ENCODE measurements at regions of chr19 and their contacts with region 1.

Region 1: DNA sequence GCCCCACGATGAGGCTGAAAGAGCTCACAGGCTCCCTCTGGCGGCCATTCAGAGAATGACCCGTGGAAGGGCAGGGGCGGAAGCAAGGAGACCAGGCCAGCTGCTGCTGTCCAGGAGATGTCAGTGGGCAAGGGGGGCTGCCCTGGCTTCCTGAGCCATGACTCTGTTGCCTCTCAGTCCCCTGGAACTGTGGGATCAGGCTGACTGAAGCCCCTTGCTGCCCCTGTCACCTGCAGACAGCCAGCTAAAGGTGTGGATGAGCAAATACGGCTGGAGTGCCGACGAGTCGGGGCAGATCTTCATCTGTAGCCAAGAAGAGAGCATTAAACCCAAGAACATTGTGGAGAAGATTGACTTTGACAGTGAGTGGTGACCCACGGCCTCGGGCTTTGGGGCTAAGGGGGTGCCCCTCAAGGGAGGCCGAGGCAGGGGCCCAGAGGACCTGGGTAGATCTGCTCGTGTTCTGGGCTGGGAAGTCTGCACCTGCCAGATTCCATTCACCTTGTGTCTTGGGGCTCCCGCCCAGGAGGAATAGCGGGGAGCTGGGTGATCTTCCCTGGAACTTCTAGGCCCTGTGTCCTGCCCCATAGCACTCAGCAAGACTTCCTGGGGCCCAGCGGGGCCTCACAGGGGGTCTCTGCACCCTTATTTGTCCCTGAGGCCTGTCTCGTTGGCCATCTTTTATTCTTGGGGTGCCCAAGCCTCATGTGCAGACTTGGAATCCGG is 12.5 kb upstream of the ACTN4 start:
- DNase-seq: peak; percentile 87
- H3K4me3 ChIP-seq: no peak overlapping the region; a peak in 1 of 4 replicates
- H3K27ac ChIP-seq: no peak overlapping the region
- H3K4me1 ChIP-seq: no peaks in the 10 kb centered on the region
- H3K27me3 ChIP-seq: no peaks in the 10 kb centered on the region
- CTCF ChIP-seq: peak; percentile 91
- EP300 ChIP-seq: no peak
- RAD21 ChIP-seq: peak; percentile 71

Region 2: GRCh38 chr19:38402967-38403861 is 231.7 kb before region 1 on chr19 and contains the start of gene FAM98C:
- CTCF ChIA-PET with region 1: interaction called, 52 read pairs
- POLR2A ChIA-PET with region 1: interaction called, 3 read pairs
- DNase-seq: peak; percentile 100
- H3K4me3 ChIP-seq: peak within 1 kb of the TSS; percentile 67 to 93
- H3K27ac ChIP-seq: peak within 1 kb of the TSS; percentile 47 to 65; a peak in 3 of 4 replicates
- H3K4me1 ChIP-seq: no peaks in the 10 kb centered on the region; a peak in 1 of 4 replicates
- H3K27me3 ChIP-seq: no peaks in the 10 kb centered on the region
- CTCF ChIP-seq: peak; percentile 82
- EP300 ChIP-seq: peak in 1 of 2 experiments; percentile 30; a peak in 1 of 4 replicates
- RAD21 ChIP-seq: peak; percentile 84
- polyA plus RNA-seq, gene FAM98C: 24.9 and 26.7 TPM in 2 replicates

Region 3: GRCh38 chr19:38514812-38515633 is 119.9 kb before region 1 on chr19:
- CTCF ChIA-PET with region 1: interaction called, 73 read pairs
- POLR2A ChIA-PET with region 1: no interaction called
- DNase-seq: peak; percentile 94
- H3K4me3 ChIP-seq: peak overlapping the region in 1 of 2 experiments; percentile 38; a peak in 1 of 4 replicates
- H3K27ac ChIP-seq: no peak overlapping the region
- H3K4me1 ChIP-seq: peaks cover 0 to 3% of the 10 kb centered on the region in 2 experiments; a peak in 1 of 4 replicates
- H3K27me3 ChIP-seq: no peaks in the 10 kb centered on the region; the same call in 1 of the 2 replicates
- CTCF ChIP-seq: peak; percentile 83
- EP300 ChIP-seq: no peak
- RAD21 ChIP-seq: peak; percentile 89

Region 4: DNA sequence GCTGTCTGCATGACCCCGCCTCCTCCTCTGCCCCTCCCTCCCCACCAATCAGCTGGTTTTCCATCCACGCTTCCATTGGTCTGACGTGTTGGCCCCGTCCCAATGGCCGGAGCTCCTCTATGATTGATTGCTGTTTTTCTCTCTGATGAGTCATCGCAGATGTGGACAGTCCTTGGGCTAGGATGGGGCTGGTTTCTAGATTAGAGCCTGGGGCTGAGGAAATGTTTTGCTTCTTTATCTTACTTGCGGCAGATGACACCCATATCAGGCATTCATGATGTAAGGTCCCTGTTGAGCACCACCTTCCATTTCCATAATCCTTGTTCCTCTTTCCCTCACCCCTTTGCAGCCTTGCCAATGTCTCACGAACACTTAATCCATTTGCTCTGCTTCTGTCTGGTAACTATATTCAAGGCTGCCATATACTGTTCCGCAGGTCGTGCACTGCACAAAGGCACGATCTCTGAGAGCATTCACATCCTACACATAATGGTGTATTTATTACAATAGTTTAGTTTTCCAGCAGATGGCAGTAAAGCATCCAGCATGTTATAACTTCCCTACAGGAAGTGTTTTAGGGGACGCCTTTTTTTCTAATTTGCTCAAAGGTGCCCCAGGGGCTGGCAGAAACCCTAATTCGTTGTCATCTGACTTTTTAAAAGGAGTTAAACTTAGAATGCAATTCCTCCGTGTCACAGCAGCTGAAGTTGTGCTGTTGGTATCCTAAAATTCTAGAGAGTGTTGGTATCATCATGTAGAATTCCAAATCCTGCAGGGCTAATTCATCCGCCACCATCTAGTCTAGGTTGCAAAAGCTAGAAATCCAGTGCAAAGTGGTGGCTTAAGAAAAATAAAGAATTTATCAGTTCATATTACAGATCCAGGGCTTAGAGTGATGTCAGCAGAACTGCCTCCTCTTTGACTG is 90.6 kb before region 1 on chr19:
- CTCF ChIA-PET with region 1: interaction called, 32 read pairs
- POLR2A ChIA-PET with region 1: interaction called, 8 read pairs
- DNase-seq: peak; percentile 93
- H3K4me3 ChIP-seq: peak overlapping the region; percentile 52 to 56
- H3K27ac ChIP-seq: peak overlapping the region; percentile 71 to 92
- H3K4me1 ChIP-seq: peaks cover 4 to 17% of the 10 kb centered on the region in 2 experiments; a peak in 2 of 4 replicates
- H3K27me3 ChIP-seq: no peaks in the 10 kb centered on the region
- CTCF ChIP-seq: peak; percentile 73
- EP300 ChIP-seq: peak in 1 of 2 experiments; percentile 63; a peak in 1 of 4 replicates
- RAD21 ChIP-seq: peak; percentile 83

Region 5: DNA sequence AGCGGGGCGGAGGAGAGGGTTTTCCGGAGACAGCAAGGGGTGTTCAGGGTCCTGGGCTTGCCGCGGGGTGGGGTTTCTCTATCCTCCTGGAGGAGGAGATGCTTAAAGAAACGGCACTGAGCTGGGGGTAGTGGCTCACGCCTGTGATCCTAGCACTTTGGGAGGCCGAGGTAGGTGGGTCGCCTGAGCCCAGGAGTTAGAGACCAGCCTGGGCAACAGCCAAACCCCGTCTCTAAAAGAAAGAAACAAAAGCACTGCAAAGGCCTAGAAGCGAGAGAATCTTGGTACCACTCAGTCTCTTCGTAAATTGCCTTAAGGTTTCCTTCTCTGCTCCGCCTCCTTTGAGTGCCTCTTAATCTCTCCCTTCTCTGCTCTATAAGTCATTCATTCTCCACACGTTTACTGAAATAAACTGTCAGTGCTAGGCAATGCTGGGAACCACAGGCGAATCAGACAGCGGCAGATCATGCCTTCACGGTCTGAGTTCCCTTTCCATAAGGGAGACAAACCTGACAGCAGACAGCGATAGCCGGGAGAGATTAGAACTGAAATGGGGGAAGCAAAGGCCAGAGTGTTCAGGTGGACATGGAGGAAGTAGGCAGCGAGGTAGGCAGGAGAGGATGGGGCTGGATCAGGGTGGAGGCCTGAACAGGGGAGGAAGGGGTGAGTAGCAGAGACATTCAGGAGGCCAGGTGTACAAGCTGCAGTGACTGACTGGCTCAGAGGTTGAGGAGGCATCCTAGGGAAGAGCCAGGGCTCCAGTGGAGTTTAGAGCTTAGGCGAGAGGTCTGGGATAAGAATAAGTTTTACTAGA is 15.4 kb before region 1 on chr19:
- CTCF ChIA-PET with region 1: interaction called, 14 read pairs
- POLR2A ChIA-PET with region 1: interaction called, 3 read pairs
- DNase-seq: no peak
- H3K4me3 ChIP-seq: peak overlapping the region; percentile 94 to 97
- H3K27ac ChIP-seq: peak overlapping the region; percentile 63 to 76; a peak in 3 of 4 replicates
- H3K4me1 ChIP-seq: peaks cover 0 to 18% of the 10 kb centered on the region in 2 experiments; a peak in 1 of 4 replicates
- H3K27me3 ChIP-seq: no peaks in the 10 kb centered on the region
- CTCF ChIP-seq: no peak
- EP300 ChIP-seq: no peak
- RAD21 ChIP-seq: no peak

Region 6: GRCh38 chr19:38647368-38647965 is 12.5 kb after region 1 on chr19 and contains the start of gene ACTN4:
- CTCF ChIA-PET with region 1: interaction called, 40 read pairs
- POLR2A ChIA-PET with region 1: interaction called, 6 read pairs
- DNase-seq: peak; percentile 99
- H3K4me3 ChIP-seq: peak within 1 kb of the TSS; percentile 59 to 99
- H3K27ac ChIP-seq: peak within 1 kb of the TSS; percentile 71 to 99
- H3K4me1 ChIP-seq: peaks cover 22 to 26% of the 10 kb centered on the region in 2 experiments; a peak in 3 of 4 replicates
- H3K27me3 ChIP-seq: no peaks in the 10 kb centered on the region
- CTCF ChIP-seq: no peak
- EP300 ChIP-seq: no peak; a peak in 1 of 4 replicates
- RAD21 ChIP-seq: no peak; the same call in 1 of the 2 replicates
- polyA plus RNA-seq, gene ACTN4: 494 and 598 TPM in 2 replicates